Ovary (tissue), 10 donors: ENCODE measurements at regions of chr4 and their contacts with region 1.

Region 1: DNA sequence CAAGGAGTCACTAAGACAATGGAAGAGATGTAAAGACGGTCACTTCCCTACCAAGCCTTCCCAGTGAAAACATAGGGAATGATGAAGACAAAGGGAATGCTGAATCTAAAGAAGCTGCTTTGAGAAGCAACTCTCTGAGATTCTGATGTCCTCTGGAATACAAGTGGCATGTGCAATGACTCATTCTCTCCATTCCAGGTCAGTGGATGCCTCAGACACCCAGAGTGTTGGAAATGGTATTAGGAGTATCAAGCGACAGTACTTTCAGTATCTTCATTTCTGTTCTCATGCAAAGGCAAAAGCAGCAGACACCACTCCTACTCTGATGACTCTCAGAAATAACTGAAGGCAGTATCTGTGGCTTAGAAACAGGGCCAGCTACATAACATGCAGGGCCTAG is 102.6 kb downstream of the FSTL5 start:
- DNase-seq: no peak
- H3K4me3 ChIP-seq: no peak overlapping the region
- H3K27ac ChIP-seq: no peak overlapping the region
- H3K4me1 ChIP-seq: no peaks in the 10 kb centered on the region
- H3K27me3 ChIP-seq: no peaks in the 10 kb centered on the region
- CTCF ChIP-seq: no peak
- EP300 ChIP-seq: no peak
- POLR2A ChIP-seq: no peak

Region 2: GRCh38 chr4:162046135-162046534 is 15.1 kb before region 1 on chr4:
- intact Hi-C with region 1: loop called in 1 of 4 experiments (anchors 2 kb)
- DNase-seq: no peak
- H3K4me3 ChIP-seq: no peak overlapping the region
- H3K27ac ChIP-seq: no peak overlapping the region
- H3K4me1 ChIP-seq: no peaks in the 10 kb centered on the region
- H3K27me3 ChIP-seq: no peaks in the 10 kb centered on the region
- CTCF ChIP-seq: no peak
- EP300 ChIP-seq: no peak
- POLR2A ChIP-seq: no peak

Region 3: DNA sequence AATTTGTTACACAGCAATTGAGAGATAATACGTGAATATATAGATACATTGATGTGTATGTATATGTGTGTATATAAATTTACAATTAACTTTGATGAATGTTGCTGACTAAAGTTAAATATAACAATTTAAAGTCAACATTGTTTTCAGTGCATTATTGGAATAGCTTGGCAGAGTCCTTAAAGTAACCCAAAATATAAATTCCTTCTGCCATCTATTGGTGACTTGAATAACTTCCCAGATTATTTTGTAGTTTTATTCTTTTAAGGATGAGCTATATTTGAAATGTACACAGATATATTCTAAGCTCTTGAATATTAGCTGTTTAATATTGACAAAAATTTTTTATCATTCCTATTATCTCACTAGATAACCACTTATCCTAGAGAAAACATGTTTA is 400.7 kb after region 1 on chr4:
- intact Hi-C with region 1: no loop called
- DNase-seq: no peak
- H3K4me3 ChIP-seq: no peak overlapping the region
- H3K27ac ChIP-seq: no peak overlapping the region
- H3K4me1 ChIP-seq: no peaks in the 10 kb centered on the region
- H3K27me3 ChIP-seq: no peaks in the 10 kb centered on the region
- CTCF ChIP-seq: no peak
- EP300 ChIP-seq: no peak
- POLR2A ChIP-seq: no peak

Region 4: DNA sequence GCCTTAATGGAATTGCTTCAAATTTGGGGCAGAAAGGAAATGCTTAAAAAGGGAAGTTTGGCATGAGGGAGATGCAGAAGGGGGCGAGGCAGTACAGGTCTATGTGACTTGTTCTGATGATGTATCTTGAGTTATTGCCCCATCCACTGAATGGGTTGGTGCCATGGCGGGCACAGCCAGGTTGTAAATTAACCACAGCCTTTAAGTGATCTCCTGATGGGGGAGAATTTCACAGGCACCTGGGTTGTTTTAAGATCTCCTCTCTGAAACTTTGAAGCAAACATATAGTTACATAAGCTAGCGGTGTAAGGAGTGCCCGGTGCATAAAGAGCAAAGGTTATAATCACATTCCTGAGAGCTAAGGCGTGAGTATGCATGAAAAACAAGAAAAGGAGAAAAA is 1319.5 kb after region 1 on chr4:
- intact Hi-C with region 1: no loop called
- DNase-seq: no peak
- H3K4me3 ChIP-seq: no peak overlapping the region
- H3K27ac ChIP-seq: no peak overlapping the region
- H3K4me1 ChIP-seq: no peaks in the 10 kb centered on the region
- H3K27me3 ChIP-seq: no peaks in the 10 kb centered on the region
- CTCF ChIP-seq: no peak
- EP300 ChIP-seq: no peak
- POLR2A ChIP-seq: no peak